PC-3 (cell line): ENCODE measurements at regions of chr21 and their contacts with region 1.

Region 1: DNA sequence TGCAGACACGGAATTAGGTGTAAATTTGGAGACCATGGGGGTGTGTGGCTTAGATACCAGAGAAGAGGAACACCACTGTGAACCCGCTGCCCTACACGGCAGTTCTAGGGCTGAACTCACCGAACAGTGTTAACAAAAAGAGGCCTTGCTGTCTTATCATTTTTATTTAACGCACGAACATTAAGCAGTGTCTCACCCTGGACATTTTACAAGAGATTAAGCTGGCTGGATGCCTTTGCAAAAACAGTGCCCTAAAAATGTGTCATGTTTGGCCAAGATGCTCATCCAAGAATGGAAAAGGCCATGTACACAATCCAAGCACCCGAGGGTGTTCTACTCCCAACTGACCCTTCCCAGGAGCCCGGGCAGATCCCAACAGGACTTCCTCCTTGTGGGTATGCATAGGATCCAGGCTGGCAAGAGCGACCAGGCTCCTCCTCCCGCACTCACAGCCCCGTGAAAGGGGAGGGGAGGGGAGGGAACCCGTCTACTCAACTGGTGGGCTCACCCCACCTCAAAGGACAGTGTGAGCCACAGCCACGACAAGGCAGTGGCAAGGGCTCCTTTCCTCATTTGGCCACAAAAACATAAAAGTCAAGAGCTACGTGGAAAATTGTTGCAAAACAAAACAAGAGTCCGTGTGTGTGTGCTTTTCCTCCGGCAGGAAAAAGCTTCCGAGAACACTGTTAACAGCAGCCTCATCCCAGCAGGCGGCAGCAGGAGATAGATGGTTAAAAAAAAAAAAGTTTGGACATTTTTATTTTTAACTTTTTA is 20.3 kb downstream of the C2CD2 start:
- DNase-seq: peak; percentile 85
- ATAC-seq: peak; percentile 63
- H3K4me3 ChIP-seq: peak overlapping the region; percentile 63
- H3K27ac ChIP-seq: peak overlapping the region; percentile 90
- H3K4me1 ChIP-seq: peaks cover 42% of the 10 kb centered on the region
- H3K27me3 ChIP-seq: no peaks in the 10 kb centered on the region
- CTCF ChIP-seq: peak; percentile 70

Region 2: GRCh38 chr21:41816220-41817165 is 117.0 kb before region 1 on chr21:
- CTCF ChIA-PET with region 1: no interaction called
- POLR2A ChIA-PET with region 1: no interaction called
- intact Hi-C with region 1: loop called (anchors 1 kb)
- DNase-seq: peak; percentile 67
- ATAC-seq: peak; percentile 86
- H3K4me3 ChIP-seq: no peak overlapping the region
- H3K27ac ChIP-seq: peak overlapping the region; percentile 61
- H3K4me1 ChIP-seq: peaks cover 13% of the 10 kb centered on the region
- H3K27me3 ChIP-seq: no peaks in the 10 kb centered on the region
- CTCF ChIP-seq: peak; percentile 83

Region 3: DNA sequence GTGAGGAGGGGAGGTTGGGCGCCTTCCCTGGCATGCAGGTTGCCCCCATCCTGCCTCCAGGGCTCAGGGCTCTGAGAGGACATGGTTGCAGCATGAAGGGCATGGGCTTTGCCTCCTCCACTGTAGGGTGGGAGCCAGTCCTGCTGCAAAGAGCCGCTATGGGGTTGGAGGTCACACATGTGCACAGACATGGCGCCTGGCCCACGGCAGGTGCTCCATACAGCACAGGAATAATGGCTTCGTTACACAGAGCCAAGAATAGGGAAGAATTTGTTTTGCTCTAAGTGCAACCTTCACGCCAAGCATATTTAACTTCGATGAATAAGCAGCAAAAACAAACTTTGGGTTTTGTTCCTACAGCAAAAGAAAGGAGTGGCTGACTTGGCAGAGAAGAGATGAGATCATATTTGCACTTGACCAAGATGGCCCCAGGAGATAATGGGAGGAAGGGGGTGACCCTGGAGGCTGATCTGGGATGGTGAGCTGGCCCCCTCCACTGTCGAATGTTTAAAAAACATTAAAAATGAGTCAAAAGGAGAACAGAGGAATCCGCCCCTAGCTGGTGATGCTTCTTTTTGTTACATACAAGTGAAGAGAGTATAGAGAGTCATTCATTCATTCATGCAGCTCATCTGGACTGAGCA is 32.7 kb after region 1 on chr21:
- CTCF ChIA-PET with region 1: interaction called, 15 read pairs
- POLR2A ChIA-PET with region 1: interaction called, 3 read pairs
- intact Hi-C with region 1: loop called (anchors 1 kb)
- DNase-seq: peak; percentile 96
- ATAC-seq: peak; percentile 68
- H3K4me3 ChIP-seq: no peak overlapping the region
- H3K27ac ChIP-seq: peak overlapping the region; percentile 95
- H3K4me1 ChIP-seq: peaks cover 46% of the 10 kb centered on the region
- H3K27me3 ChIP-seq: no peaks in the 10 kb centered on the region
- CTCF ChIP-seq: peak; percentile 53

Region 4: DNA sequence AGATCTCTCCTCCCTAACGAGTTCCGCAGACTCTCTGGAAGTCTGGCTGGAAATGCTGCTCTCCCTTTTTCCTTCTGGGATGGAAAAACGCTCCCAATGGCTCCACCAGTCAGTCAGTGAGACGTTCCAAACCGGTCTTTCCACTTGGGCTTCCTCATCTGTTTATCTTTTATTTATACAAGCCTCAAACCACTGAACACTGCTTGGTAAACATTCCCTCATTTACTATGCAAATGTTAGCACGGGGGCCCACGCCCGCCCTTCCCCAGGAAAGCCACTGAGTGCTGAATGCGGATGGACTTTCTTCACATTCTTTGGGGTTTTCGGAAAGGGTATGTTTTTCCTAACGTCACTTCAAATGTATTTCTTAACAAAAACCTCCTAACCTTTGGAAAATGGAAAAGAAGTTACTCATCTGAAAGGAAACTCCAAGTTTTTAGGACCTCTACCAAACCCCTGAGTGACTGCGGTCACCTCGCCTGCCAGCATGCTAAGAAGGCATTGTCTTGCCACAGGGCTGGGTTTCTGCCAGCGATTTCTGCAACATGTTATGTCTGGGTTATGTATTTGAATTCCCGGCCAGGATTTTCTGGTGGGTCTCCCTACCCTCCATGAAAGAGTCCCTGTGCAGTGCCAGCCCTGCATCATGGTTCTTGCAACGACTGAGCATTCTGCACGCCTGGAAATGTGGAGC is 123.6 kb after region 1 on chr21:
- CTCF ChIA-PET with region 1: no interaction called
- POLR2A ChIA-PET with region 1: no interaction called
- intact Hi-C with region 1: loop called (anchors 2 kb)
- DNase-seq: peak; percentile 95
- ATAC-seq: peak; percentile 86
- H3K4me3 ChIP-seq: peak overlapping the region; percentile 50
- H3K27ac ChIP-seq: peak overlapping the region; percentile 86
- H3K4me1 ChIP-seq: peaks cover 24% of the 10 kb centered on the region
- H3K27me3 ChIP-seq: no peaks in the 10 kb centered on the region
- CTCF ChIP-seq: no peak

Region 5: GRCh38 chr21:42117229-42117966 is 183.9 kb after region 1 on chr21:
- CTCF ChIA-PET with region 1: interaction called, 9 read pairs
- POLR2A ChIA-PET with region 1: no interaction called
- intact Hi-C with region 1: loop called (anchors 1 kb)
- DNase-seq: peak; percentile 94
- ATAC-seq: peak; percentile 65
- H3K4me3 ChIP-seq: peak overlapping the region; percentile 14; the same call in 1 of the 2 replicates
- H3K27ac ChIP-seq: peak overlapping the region; percentile 60
- H3K4me1 ChIP-seq: peaks cover 59% of the 10 kb centered on the region
- H3K27me3 ChIP-seq: no peaks in the 10 kb centered on the region
- CTCF ChIP-seq: peak; percentile 97